ENCODE measurements at regions of chr12 and their contacts with region 1.

Region 1: DNA sequence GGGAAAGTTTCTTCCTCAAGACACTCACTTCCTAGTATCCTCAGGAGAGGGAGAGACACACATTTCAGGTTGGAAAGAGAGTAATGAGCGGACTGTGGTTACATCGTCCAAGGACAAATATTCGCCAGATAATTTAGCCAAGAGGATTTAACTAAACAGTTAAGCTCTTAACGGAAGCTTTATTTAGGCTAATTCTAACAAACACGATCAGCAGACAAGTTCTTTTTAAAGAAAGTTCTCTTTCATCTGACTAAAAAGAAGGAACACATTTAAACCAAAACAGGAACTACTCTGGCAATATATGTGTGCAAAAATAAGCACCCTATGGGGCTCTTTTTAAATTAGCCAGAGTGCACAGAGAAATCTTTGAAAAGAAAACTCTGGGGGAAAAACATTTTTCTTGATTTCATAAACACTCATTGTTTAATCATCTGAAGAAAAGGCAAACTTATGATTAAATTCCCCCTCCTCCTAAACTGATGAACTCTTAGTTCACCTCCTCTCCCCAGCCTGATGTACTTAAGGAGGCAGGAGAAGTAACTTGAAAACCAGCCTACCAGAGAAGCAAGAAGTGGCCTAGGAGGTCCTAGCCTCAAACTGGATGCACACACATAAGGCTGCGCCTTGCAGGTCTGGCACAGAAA is 13.3 kb upstream of the BTG1 start:
- DNase-seq: no peak
- ATAC-seq: no peak
- H3K4me3 ChIP-seq: peak overlapping the region in 1 of 10 donors; percentile 2
- H3K27ac ChIP-seq: peak overlapping the region in 3 of 10 donors; percentile 24 to 57 (median 45)
- H3K4me1 ChIP-seq: peaks cover 0 to 35% (median 0%) of the 10 kb centered on the region in 9 donors
- H3K27me3 ChIP-seq: no peaks in the 10 kb centered on the region
- CTCF ChIP-seq: no peak

Region 2: GRCh38 chr12:91588874-91589454 is 570.0 kb before region 1 on chr12:
- intact Hi-C with region 1: loop called in 1 of 10 experiments (anchors 10 kb)
- DNase-seq: no peak
- ATAC-seq: peak in 3 of 8 donors; percentile 29 to 86 (median 67)
- H3K4me3 ChIP-seq: no peak overlapping the region
- H3K27ac ChIP-seq: peak overlapping the region in 3 of 10 donors; percentile 2 to 43 (median 31)
- H3K4me1 ChIP-seq: peaks cover 0 to 12% (median 5%) of the 10 kb centered on the region in 9 donors
- H3K27me3 ChIP-seq: no peaks in the 10 kb centered on the region
- CTCF ChIP-seq: no peak

Region 3: GRCh38 chr12:92224685-92225331 is 65.9 kb after region 1 on chr12:
- intact Hi-C with region 1: loop called in 1 of 10 experiments (anchors 10 kb)
- DNase-seq: peak in 1 of 2 donors; percentile 16
- ATAC-seq: peak in 7 of 8 donors; percentile 39 to 85 (median 49)
- H3K4me3 ChIP-seq: no peak overlapping the region
- H3K27ac ChIP-seq: peak overlapping the region in 1 of 10 donors; percentile 3
- H3K4me1 ChIP-seq: peaks cover 0 to 11% (median 5%) of the 10 kb centered on the region in 9 donors
- H3K27me3 ChIP-seq: no peaks in the 10 kb centered on the region
- CTCF ChIP-seq: no peak